Ascending aorta (tissue), 2 donors: ENCODE measurements at regions of chr3 and their contacts with region 1.

Region 1: GRCh38 chr3:49856181-49857005 is at the start of gene TRAIP:
- DNase-seq: peak; percentile 73 to 97
- H3K4me3 ChIP-seq: peak within 1 kb of the TSS; percentile 64 to 80
- H3K27ac ChIP-seq: peak within 1 kb of the TSS; percentile 83 to 89
- H3K4me1 ChIP-seq: peaks cover 8% of the 10 kb centered on the region in 2 donors
- H3K27me3 ChIP-seq: no peaks in the 10 kb centered on the region
- CTCF ChIP-seq: peak in 1 of 3 experiments; percentile 5
- total RNA-seq, gene TRAIP: not detected

Region 2: GRCh38 chr3:49723628-49724551 is 132.5 kb before region 1 on chr3 and contains the start of gene GMPPB:
- intact Hi-C with region 1: loop called (anchors 10 kb)
- DNase-seq: peak; percentile 92 to 97
- H3K4me3 ChIP-seq: peak within 1 kb of the TSS; percentile 86 to 98
- H3K27ac ChIP-seq: peak within 1 kb of the TSS; percentile 93 to 97
- H3K4me1 ChIP-seq: peaks cover 16 to 20% of the 10 kb centered on the region in 2 donors
- H3K27me3 ChIP-seq: no peaks in the 10 kb centered on the region
- CTCF ChIP-seq: no peak
- total RNA-seq, gene GMPPB: 16.4 TPM

Region 3: DNA sequence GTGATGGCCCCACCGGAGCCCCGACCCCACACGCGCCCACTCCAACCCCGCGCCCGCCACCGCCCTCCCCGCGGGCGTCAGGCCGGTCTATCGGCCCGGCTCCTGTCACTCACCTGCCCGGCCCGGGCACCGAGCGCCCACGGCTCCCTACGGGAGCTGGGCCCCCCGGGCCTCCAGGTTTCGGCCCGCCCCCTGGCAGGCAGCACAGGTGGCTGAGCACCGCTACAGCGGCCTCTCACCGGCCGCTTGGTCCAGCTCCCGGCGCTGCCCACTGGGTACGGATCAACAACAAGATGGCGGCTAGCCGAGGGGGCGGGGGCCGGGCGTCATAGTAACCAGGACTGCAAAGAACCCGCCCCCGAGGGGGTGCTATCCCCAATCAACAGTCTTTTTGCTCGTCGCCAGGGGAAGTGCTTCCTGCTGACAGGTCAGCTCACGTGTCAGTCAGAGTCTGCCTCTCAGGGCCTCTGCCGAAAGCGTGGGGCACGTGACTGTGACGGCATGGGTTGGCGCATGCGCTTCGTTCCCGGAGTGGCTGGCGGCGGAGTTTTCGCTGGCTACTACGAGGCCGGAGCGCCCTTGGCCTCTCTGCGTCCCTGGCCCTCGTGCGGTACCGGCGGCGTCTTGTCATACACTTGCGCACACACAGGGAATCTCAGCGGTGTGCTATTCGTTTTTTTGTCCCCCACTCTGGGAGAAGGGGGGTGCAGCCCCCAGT is 70.0 kb before region 1 on chr3 and contains the start of gene IP6K1:
- intact Hi-C with region 1: loop called (anchors 1 kb)
- DNase-seq: peak; percentile 100
- H3K4me3 ChIP-seq: peak within 1 kb of the TSS; percentile 82 to 96
- H3K27ac ChIP-seq: peak within 1 kb of the TSS; percentile 91 to 92
- H3K4me1 ChIP-seq: peaks cover 10 to 20% of the 10 kb centered on the region in 2 donors
- H3K27me3 ChIP-seq: no peaks in the 10 kb centered on the region
- CTCF ChIP-seq: no peak
- total RNA-seq, gene IP6K1: 33.8 TPM

Region 4: DNA sequence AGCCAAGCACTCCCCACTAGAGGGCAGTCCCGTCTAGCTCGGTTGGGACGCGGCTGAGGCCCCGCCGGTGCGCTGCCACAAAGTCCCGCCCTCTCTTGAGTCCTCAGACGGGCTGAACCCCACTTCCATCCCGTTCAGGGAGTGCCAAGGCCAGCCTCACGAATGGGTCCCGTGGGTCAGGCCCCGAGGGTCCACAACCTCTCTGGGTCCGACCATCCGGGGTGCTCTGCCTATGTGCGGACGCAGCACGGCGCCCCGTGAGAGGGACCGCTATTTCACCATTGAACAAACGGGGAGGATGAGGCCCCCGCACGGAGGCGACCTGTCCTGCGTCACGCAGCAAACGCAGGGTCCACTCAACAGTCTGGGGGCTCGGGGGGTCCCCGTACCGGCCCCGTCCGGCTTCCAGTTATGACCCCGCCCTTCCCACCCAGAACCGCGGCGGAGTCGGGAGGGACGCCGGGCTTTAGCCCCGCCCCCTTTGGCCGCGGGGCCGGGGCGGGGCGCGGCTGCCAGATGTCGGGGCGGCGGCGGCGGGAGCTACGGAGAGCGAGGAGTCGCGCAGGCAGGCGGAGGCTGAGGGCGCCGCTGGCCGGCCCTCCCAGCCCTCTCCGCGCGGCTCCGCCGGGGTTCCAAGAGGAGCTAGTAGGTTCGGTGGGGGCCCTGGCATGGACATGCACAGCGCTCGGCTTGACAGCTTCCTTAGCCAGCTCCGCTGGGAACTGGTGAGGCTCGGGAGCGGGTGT is 53.5 kb before region 1 on chr3 and contains the start of gene INKA1:
- intact Hi-C with region 1: loop called (anchors 1 kb)
- DNase-seq: peak; percentile 49 to 93
- H3K4me3 ChIP-seq: peak within 1 kb of the TSS; percentile 84 to 86
- H3K27ac ChIP-seq: peak within 1 kb of the TSS; percentile 98
- H3K4me1 ChIP-seq: peaks cover 22 to 40% of the 10 kb centered on the region in 2 donors
- H3K27me3 ChIP-seq: no peaks in the 10 kb centered on the region
- CTCF ChIP-seq: peak; percentile 88 to 96 (median 89)
- total RNA-seq, gene INKA1: not detected

Region 5: GRCh38 chr3:49906004-49906743 is 49.8 kb after region 1 on chr3:
- intact Hi-C with region 1: loop called (anchors 1 kb)
- DNase-seq: peak in 1 of 2 donors; percentile 76
- H3K4me3 ChIP-seq: peak overlapping the region; percentile 5 to 53
- H3K27ac ChIP-seq: peak overlapping the region; percentile 50
- H3K4me1 ChIP-seq: peaks cover 0 to 14% of the 10 kb centered on the region in 2 donors
- H3K27me3 ChIP-seq: no peaks in the 10 kb centered on the region
- CTCF ChIP-seq: peak; percentile 60 to 74 (median 63)

Region 6: DNA sequence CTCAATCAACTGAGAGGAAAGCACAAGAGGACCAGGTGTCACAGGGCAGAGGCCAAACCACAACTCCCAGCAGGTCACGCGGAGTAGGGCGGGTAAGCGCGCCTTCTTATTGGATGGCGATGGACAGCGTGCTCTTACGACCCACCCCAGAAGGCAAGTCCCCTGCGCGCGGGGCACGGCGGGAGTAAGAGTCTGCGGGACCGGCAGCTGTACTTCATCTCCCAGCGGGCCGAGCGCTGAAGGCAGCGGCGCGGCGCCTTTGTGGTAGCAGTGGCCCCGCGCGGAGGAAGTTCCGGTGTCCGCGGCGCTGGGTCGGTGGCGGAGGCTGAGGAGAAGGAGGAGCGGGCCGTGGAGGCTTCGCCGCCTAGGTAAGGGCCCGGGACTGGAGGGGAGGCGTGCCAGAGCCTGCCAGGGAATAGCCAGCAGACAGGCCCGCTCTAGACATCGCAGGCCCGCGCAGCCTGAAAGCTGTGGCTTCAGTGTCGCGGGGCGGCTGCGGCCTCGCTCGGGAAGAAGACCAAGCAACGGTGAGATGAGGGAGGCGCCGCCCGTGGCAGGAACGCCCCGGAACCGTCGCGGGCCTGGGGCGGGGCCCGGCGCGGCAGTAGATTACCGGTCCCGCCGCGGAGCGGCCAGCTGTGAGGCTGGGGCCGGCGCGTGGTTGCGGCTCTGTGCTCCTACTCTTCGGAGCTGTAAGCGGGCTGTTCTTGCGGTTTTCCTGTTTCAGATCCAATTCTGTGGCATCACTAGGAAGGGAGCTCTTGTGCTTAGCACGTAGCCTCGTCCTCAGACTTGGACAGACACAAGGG is 83.7 kb after region 1 on chr3 and contains the start of gene RBM6:
- intact Hi-C with region 1: loop called (anchors 2 kb)
- DNase-seq: peak; percentile 94 to 99
- H3K4me3 ChIP-seq: peak within 1 kb of the TSS; percentile 74 to 86
- H3K27ac ChIP-seq: peak within 1 kb of the TSS; percentile 90 to 97
- H3K4me1 ChIP-seq: peaks cover 3 to 6% of the 10 kb centered on the region in 2 donors
- H3K27me3 ChIP-seq: no peaks in the 10 kb centered on the region
- CTCF ChIP-seq: no peak
- total RNA-seq, gene RBM6: 84.7 TPM

Region 7: GRCh38 chr3:50204804-50205413 is 348.5 kb after region 1 on chr3 and contains the start of gene SLC38A3:
- intact Hi-C with region 1: no loop called
- DNase-seq: no peak
- H3K4me3 ChIP-seq: peak within 1 kb of the TSS; percentile 55 to 72
- H3K27ac ChIP-seq: no peak within 1 kb of the TSS
- H3K4me1 ChIP-seq: peaks cover 12 to 15% of the 10 kb centered on the region in 2 donors
- H3K27me3 ChIP-seq: no peaks in the 10 kb centered on the region
- CTCF ChIP-seq: no peak
- total RNA-seq, gene SLC38A3: not detected